ENCODE measurements at regions of chr1 and their contacts with region 1.

Region 1: GRCh38 chr1:68164918-68165317 is 67.4 kb downstream of the WLS start:
- DNase-seq: no peak
- ATAC-seq: no peak
- H3K4me3 ChIP-seq: no peak overlapping the region
- H3K27ac ChIP-seq: no peak overlapping the region
- H3K4me1 ChIP-seq: peaks cover 2% of the 10 kb centered on the region
- H3K27me3 ChIP-seq: no peaks in the 10 kb centered on the region
- CTCF ChIP-seq: no peak
- POLR2A ChIP-seq: no peak
- RAD21 ChIP-seq: no peak

Region 2: DNA sequence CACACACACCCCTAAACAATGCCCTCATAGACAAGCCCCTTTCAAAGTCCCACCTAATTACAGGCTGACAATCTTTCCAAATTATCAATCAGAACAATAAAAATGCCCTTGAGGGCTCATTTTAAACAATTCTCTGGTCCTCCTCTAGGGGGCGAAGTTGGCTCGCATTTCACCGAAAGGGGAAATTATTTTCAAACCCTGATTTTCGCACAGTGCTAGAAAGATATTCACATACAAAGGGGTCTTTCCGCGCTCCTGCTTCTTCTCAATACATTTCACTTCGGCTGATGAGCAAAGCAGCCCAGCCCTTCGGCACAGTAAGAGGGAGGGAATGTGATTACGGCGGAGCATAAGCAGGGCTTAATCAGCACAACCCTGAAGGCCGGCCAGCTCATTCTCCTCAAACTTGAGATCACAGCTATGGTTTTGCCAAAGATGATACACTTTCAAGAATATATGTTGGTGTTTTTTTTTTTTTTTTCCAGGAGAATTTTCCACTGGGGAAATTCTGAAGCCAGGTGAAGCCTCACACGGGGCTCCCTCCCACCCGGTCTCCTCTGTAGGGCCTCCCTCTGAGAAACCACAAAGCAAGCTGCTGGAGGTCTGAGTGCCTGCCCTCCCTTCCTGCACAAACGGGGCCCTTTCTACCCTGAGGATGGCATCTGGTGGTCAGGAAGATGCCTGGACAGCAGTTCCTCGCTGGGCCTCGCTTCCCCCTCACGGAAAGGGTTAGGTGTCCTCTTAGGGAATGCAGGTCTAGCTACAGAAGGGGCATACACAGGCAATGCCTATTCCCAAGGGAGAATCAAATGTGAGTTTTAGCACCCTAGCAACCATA is 398.6 kb before region 1 on chr1:
- CTCF ChIA-PET with region 1: no interaction called
- POLR2A ChIA-PET with region 1: no interaction called
- dilution Hi-C with region 1: no loop called
- in situ Hi-C with region 1: no loop called
- intact Hi-C with region 1: no loop called
- DNase-seq: peak; percentile 94
- ATAC-seq: peak; percentile 83
- H3K4me3 ChIP-seq: no peak overlapping the region; the same call in 1 of the 2 replicates
- H3K27ac ChIP-seq: peak overlapping the region; percentile 65
- H3K4me1 ChIP-seq: peaks cover 27% of the 10 kb centered on the region
- H3K27me3 ChIP-seq: no peaks in the 10 kb centered on the region
- CTCF ChIP-seq: peak; percentile 63
- POLR2A ChIP-seq: no peak
- RAD21 ChIP-seq: peak; percentile 63

Region 3: DNA sequence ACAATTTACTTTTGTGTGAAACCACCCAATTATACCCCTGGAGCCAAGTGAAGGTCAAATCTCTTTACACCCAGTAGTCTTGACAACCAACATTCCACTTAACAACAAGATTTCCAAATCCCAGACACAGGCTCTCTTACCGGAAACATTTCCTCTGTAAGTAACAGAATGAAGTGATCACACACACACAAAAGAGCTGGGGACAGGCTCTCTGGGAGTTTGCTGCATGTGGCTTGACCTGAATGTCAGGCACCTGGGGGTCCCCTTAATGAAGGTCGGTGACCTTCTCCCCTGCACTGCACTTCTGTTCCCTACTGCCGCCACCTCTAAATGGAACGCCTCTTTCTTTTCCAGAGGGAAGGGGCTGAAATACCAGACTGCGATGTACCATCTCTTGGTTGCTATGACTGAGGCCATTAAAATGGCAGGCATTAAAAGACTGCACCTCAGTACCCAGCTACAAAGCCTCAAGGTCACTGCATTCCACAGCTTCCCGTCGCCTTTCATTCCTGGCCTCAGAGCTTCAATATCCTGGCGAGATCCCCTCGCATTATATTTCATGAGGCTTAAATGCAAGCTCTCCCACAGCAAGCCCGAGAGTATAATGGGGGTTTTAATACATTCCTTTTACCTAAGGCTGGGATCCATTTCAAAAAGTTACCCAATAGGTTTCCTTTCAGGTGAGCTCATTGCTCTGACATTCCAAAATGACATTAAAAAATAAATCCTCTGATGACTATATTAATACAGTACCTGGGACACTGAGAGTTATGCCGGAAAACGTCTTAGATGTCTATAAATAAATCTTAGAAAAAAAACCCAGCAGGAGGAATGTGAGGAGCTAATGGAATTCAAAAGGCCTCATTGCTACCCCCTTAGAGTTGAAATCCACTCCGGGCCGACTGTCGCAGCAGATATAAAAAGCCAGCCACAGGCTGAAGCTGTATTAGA is 23.6 kb before region 1 on chr1:
- CTCF ChIA-PET with region 1: no interaction called
- POLR2A ChIA-PET with region 1: no interaction called
- dilution Hi-C with region 1: no loop called
- in situ Hi-C with region 1: no loop called
- intact Hi-C with region 1: loop called (anchors 2 kb)
- DNase-seq: peak; percentile 38
- ATAC-seq: peak; percentile 14; the same call in 1 of the 2 replicates
- H3K4me3 ChIP-seq: no peak overlapping the region
- H3K27ac ChIP-seq: peak overlapping the region; percentile 88; the same call in 1 of the 2 replicates
- H3K4me1 ChIP-seq: peaks cover 19% of the 10 kb centered on the region
- H3K27me3 ChIP-seq: no peaks in the 10 kb centered on the region
- CTCF ChIP-seq: no peak
- POLR2A ChIP-seq: no peak
- RAD21 ChIP-seq: no peak

Region 4: GRCh38 chr1:68149907-68150306 is 15.0 kb before region 1 on chr1:
- CTCF ChIA-PET with region 1: no interaction called
- POLR2A ChIA-PET with region 1: no interaction called
- dilution Hi-C with region 1: no loop called
- in situ Hi-C with region 1: no loop called
- intact Hi-C with region 1: loop called (anchors 1 kb)
- DNase-seq: no peak
- ATAC-seq: no peak
- H3K4me3 ChIP-seq: no peak overlapping the region
- H3K27ac ChIP-seq: no peak overlapping the region
- H3K4me1 ChIP-seq: 0 out of 2 replicates have a peak, but pooled peaks cover 2% of the 10 kb centered on the region
- H3K27me3 ChIP-seq: no peaks in the 10 kb centered on the region
- CTCF ChIP-seq: no peak
- POLR2A ChIP-seq: no peak
- RAD21 ChIP-seq: no peak

Measured in IMR-90 (cell line).